ENCODE measurements at regions of chr15 and their contacts with region 1.

Region 1: GRCh38 chr15:59562448-59563186 is 49.0 kb upstream of the GCNT3 start:
- DNase-seq: no peak

Region 2: GRCh38 chr15:58019503-58020376 is 1542.9 kb before region 1 on chr15:
- intact Hi-C with region 1: loop called in 1 of 2 experiments (anchors 5 kb)
- DNase-seq: no peak